Activated naive CD4-positive, alpha-beta T cell treated with anti-CD3 and anti-CD28 coated beads, Interleukin-2, amount 10 ng/mL, durations not matched to agents 7 days and 5 days (primary cell): ENCODE measurements at regions of chr1 and their contacts with region 1.

Region 1: GRCh38 chr1:24415334-24415909 is at the start of gene NIPAL3:
- DNase-seq: peak; percentile 99
- H3K4me3 Mint-ChIP-seq: peak within 1 kb of the TSS; percentile 86
- H3K27ac Mint-ChIP-seq: peak within 1 kb of the TSS; percentile 88
- H3K4me1 Mint-ChIP-seq: peaks cover 72% of the 10 kb centered on the region
- H3K27me3 Mint-ChIP-seq: no peaks in the 10 kb centered on the region

Region 2: DNA sequence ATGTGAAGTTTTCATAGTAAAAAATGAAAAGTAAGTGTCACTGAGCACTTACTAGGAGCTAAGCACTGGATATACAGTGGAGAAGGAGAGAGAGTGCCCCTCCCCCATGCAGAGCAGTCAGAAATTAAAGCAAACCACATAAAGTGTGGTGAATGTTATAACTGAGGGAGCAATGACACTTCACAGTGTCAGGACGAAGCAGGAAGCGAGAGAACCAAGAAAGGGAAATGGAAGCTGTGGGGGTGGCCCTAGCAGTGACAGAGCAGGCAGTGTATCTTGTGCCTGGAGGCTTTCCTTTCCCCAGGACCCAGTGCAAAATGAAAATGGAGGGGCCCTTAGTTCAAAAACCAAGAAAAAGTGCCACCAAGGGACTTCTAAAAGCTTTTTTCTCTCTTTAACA is 65.7 kb after region 1 on chr1:
- CTCF ChIA-PET with region 1: interaction called, 40 read pairs
- DNase-seq: peak; percentile 82
- H3K4me3 Mint-ChIP-seq: peak overlapping the region; percentile 64
- H3K27ac Mint-ChIP-seq: peak overlapping the region; percentile 98
- H3K4me1 Mint-ChIP-seq: peaks cover 70% of the 10 kb centered on the region
- H3K27me3 Mint-ChIP-seq: no peaks in the 10 kb centered on the region

Region 3: DNA sequence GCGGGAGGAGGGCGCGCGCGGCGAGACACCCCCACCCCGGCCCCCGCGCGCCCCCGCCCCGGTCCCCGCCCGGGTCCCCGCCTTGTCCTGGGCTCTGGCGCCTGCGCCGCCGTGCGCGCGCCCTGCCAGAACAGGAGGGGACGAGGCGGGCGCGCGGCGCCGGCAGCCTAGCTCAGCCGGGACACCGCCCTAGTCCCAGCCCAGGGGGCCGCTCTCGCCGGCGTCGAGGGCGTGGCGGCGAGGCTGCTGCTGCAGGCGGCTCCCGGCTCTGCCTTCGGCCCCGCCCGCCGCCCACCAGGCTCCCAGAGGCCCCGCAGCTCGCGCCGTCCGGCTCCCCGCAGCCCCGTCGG is 87.3 kb after region 1 on chr1 and contains the start of gene RCAN3:
- CTCF ChIA-PET with region 1: interaction called, 31 read pairs
- DNase-seq: peak; percentile 92
- H3K4me3 Mint-ChIP-seq: peak within 1 kb of the TSS; percentile 98
- H3K27ac Mint-ChIP-seq: peak within 1 kb of the TSS; percentile 99
- H3K4me1 Mint-ChIP-seq: peaks cover 57% of the 10 kb centered on the region
- H3K27me3 Mint-ChIP-seq: no peaks in the 10 kb centered on the region

Region 4: DNA sequence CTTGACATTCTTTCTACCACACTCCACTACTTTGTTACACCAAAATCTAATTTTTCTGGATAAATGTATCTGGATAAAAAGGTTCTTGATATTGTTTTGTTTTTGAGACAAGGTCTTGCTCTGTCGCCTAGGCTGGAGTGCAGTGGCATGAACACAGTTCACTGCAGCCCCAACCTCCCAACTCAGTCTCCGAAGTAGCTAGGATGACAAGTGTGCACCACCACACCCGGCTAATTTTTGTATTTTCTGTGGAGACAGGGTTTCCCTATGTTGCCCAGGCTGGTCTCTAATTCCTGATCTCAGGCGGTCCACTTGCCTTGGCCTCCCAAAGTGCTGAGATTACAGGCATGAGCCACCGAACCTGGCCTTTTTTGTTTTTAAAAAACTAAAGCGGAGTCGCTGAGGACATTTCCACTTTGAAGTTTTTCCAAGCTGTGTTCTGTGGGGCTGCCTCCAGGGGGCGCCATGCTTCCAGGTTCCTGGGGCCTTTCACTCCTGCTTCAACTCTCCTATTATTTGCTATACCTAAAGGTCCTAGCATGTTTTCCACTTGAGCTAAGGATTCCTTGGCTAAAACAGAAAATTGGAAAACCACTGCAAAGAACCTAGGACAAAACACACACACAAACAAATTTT is 126.4 kb after region 1 on chr1:
- CTCF ChIA-PET with region 1: interaction called, 12 read pairs
- DNase-seq: peak; percentile 47
- H3K4me3 Mint-ChIP-seq: no peak overlapping the region
- H3K27ac Mint-ChIP-seq: peak overlapping the region; percentile 77
- H3K4me1 Mint-ChIP-seq: peaks cover 62% of the 10 kb centered on the region
- H3K27me3 Mint-ChIP-seq: peaks cover 4% of the 10 kb centered on the region

Region 5: DNA sequence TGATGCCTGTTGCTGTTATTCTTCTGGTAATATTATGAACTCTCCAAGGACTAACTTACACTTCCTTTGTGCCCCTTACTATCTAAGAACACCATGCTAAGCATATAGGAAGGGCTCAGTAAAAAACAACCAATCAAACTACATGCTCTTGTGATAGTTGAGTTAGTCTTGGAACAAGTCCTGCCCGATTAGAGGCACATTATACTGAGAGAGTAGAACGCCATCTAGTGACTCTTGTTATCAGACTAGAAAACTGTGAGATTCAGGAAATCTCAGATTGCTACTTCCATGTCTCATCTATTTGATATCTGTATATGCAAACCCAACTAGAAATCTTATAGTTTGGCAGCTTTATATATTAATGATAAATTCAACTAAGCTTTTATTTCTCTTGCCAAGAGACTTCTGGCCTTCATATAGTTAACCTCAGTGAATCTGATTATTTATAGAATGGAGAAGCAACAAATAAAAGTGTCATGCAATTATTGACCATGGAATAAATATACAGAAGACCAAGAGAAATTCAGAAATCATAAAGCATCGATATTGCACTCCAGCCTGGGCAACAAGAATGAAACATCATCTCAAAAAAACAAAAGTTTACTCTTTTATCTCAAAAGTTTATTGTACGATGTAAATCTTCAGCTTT is 219.9 kb after region 1 on chr1:
- CTCF ChIA-PET with region 1: interaction called, 10 read pairs
- DNase-seq: no peak
- H3K4me3 Mint-ChIP-seq: no peak overlapping the region
- H3K27ac Mint-ChIP-seq: no peak overlapping the region
- H3K4me1 Mint-ChIP-seq: peaks cover 8% of the 10 kb centered on the region
- H3K27me3 Mint-ChIP-seq: peaks cover 27% of the 10 kb centered on the region